ENCODE measurements at regions of chr22 and their contacts with region 1.

Region 1: DNA sequence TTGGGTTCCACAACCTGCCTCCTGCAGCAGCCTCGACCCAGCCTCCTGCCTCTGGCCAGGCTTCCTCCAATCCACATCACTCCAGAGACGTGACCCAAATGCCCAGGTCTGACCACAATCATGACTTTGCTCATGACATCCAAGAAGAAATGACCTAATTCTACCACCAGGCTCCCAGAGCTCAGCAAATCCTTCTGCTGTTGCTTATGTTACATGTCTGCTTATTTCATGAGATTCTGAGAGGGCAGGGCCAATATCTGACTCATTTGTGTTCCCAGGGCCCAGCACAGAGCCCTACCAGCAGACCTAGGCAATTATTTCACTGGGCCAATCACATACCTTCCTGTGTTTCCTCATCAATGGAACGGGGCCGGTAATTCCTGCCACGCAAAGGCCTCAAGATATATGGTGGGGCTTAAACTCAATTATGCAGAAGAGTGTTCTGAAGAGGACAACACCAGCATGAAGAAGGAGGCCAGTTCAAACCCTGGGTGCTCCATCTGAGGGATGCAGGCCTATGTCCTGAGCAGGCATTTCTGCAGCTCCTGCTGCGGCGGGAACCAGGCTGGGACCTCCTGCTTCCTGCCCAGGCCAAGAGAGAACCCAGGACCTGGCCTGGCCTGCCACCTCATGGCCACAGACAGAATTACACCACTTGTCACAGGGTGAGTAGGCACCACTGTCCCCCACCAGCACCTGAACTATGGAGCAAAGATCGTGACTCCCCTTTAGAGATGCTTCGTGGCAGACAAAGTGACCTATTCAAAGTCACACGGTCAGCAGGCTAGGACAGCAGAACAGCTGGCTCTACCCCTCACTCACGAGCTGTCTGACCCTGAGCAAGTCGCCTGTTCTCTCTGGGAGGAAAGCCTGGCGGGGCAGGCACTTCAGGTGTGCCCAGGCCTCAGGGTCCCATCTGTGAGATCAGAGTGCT is 5.9 kb downstream of the CENPM start:
- DNase-seq: peak; percentile 92
- ATAC-seq: peak; percentile 48
- H3K4me3 ChIP-seq: peak overlapping the region in 1 of 5 experiments; percentile 21
- H3K4me3 Mint-ChIP-seq: peak overlapping the region; percentile 96
- H3K27ac ChIP-seq: peak overlapping the region; percentile 99
- H3K27ac Mint-ChIP-seq: peak overlapping the region; percentile 99
- H3K4me1 ChIP-seq: peaks cover 50 to 62% of the 10 kb centered on the region in 2 donors
- H3K4me1 Mint-ChIP-seq: peaks cover 55% of the 10 kb centered on the region
- H3K27me3 ChIP-seq: peaks cover 0 to 5% (median 0%) of the 10 kb centered on the region in 4 experiments
- H3K27me3 Mint-ChIP-seq: no peaks in the 10 kb centered on the region
- CTCF ChIP-seq: peak; percentile 93

Region 2: DNA sequence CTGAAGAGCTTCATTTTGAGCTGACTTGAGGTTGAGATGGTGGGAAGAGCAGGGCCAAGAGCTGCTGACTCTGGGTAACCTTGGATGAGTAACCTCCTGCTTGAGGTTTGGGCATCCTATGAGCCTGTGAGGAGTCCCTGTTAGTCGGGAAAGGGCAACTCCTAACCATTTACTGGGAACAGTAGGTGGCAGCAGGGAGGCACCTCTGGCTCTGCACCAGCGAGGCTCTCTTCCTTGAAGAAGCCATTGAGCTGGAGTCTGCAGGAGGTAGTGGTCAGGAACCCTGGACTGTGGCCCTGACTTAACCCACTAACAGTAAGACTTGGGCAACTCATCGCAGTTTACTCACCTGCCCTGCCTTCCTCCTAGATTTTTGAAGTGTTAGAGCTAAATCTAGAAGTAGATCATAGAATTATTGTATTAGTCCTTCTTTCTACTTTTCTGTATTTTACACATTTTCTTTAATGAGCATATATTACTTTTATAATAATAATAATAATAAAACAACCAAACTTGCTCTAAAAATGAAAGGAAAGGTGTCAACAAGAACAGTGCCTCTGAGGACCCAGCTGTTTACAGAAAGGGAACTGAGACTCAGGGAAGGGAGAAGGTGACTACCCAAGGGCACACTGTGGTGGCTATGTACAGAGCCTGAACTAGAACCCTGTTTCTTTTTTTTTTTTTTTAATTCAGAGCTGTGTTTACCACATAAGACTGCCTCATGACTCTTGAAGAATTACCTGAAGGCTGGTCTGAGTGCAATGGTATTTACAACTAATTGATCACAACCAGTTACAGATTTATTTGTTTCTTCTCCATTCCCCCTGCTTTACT is 194.3 kb before region 1 on chr22:
- CTCF ChIA-PET with region 1: interaction called, 15 read pairs
- POLR2A ChIA-PET with region 1: interaction called, 3 read pairs
- intact Hi-C with region 1: no loop called
- DNase-seq: peak; percentile 73
- ATAC-seq: peak; percentile 96
- H3K4me3 ChIP-seq: peak overlapping the region in 1 of 5 experiments; percentile 26
- H3K4me3 Mint-ChIP-seq: peak overlapping the region; percentile 63
- H3K27ac ChIP-seq: peak overlapping the region; percentile 50 to 62
- H3K27ac Mint-ChIP-seq: peak overlapping the region; percentile 80
- H3K4me1 ChIP-seq: peaks cover 30 to 32% of the 10 kb centered on the region in 2 donors
- H3K4me1 Mint-ChIP-seq: peaks cover 32% of the 10 kb centered on the region
- H3K27me3 ChIP-seq: no peaks in the 10 kb centered on the region
- H3K27me3 Mint-ChIP-seq: no peaks in the 10 kb centered on the region
- CTCF ChIP-seq: peak; percentile 40

Region 3: GRCh38 chr22:41832553-41833368 is 108.3 kb before region 1 on chr22 and contains the start of gene SREBF2:
- CTCF ChIA-PET with region 1: interaction called, 40 read pairs
- POLR2A ChIA-PET with region 1: interaction called, 64 read pairs
- intact Hi-C with region 1: loop called (anchors 1 kb)
- DNase-seq: peak; percentile 99
- ATAC-seq: peak; percentile 86
- H3K4me3 ChIP-seq: peak within 1 kb of the TSS; percentile 49 to 92 (median 90)
- H3K4me3 Mint-ChIP-seq: peak within 1 kb of the TSS; percentile 96
- H3K27ac ChIP-seq: peak within 1 kb of the TSS; percentile 99 to 100
- H3K27ac Mint-ChIP-seq: peak within 1 kb of the TSS; percentile 99
- H3K4me1 ChIP-seq: peaks cover 20 to 36% of the 10 kb centered on the region in 2 donors
- H3K4me1 Mint-ChIP-seq: peaks cover 55% of the 10 kb centered on the region
- H3K27me3 ChIP-seq: no peaks in the 10 kb centered on the region
- H3K27me3 Mint-ChIP-seq: no peaks in the 10 kb centered on the region
- CTCF ChIP-seq: no peak
- total RNA-seq, gene SREBF2: 287 and 304 TPM in 2 replicates

Region 4: GRCh38 chr22:41888627-41889200 is 52.4 kb before region 1 on chr22:
- CTCF ChIA-PET with region 1: interaction called, 12 read pairs
- POLR2A ChIA-PET with region 1: interaction called, 8 read pairs
- intact Hi-C with region 1: loop called (anchors 1 kb)
- DNase-seq: no peak
- ATAC-seq: peak; percentile 12
- H3K4me3 ChIP-seq: peak overlapping the region in 1 of 5 experiments; percentile 2
- H3K4me3 Mint-ChIP-seq: peak overlapping the region; percentile 56
- H3K27ac ChIP-seq: peak overlapping the region; percentile 56 to 71
- H3K27ac Mint-ChIP-seq: peak overlapping the region; percentile 90
- H3K4me1 ChIP-seq: peaks cover 21 to 35% of the 10 kb centered on the region in 2 donors
- H3K4me1 Mint-ChIP-seq: peaks cover 62% of the 10 kb centered on the region
- H3K27me3 ChIP-seq: no peaks in the 10 kb centered on the region
- H3K27me3 Mint-ChIP-seq: no peaks in the 10 kb centered on the region
- CTCF ChIP-seq: no peak

Region 5: GRCh38 chr22:41925655-41926460 is 15.2 kb before region 1 on chr22:
- CTCF ChIA-PET with region 1: interaction called, 499 read pairs
- POLR2A ChIA-PET with region 1: interaction called, 960 read pairs
- intact Hi-C with region 1: loop called (anchors 1 kb)
- DNase-seq: peak; percentile 88
- ATAC-seq: peak; percentile 46
- H3K4me3 ChIP-seq: peak overlapping the region; percentile 59 to 96 (median 88)
- H3K4me3 Mint-ChIP-seq: peak overlapping the region; percentile 100
- H3K27ac ChIP-seq: peak overlapping the region; percentile 94 to 95
- H3K27ac Mint-ChIP-seq: peak overlapping the region; percentile 99
- H3K4me1 ChIP-seq: peaks cover 70 to 86% of the 10 kb centered on the region in 2 donors
- H3K4me1 Mint-ChIP-seq: peaks cover 67% of the 10 kb centered on the region
- H3K27me3 ChIP-seq: no peaks in the 10 kb centered on the region
- H3K27me3 Mint-ChIP-seq: no peaks in the 10 kb centered on the region
- CTCF ChIP-seq: peak; percentile 83